ENCODE measurements at regions of chr1 and their contacts with region 1.

Region 1: DNA sequence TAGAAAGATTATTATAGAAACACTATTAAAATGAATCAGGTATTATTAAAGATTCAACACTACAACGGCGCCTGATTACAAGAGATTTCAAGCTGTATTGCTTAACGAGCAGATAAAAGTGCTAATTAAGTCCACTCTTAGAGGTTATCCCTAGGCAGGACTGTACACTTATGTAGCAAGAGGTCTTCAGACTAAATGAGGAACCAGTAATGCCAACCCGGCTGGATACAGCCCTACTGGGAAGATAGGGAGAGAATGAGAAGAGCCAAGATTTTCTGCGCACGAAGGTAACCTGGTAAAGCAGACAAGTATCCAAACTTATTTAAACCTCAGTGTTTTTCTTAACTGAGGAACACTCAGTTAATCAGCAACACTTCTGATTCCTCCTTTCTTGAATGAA is 115.7 kb upstream of the HIVEP3 start:
- DNase-seq: no peak
- ATAC-seq: no peak

Region 2: GRCh38 chr1:41268154-41268770 is 766.2 kb before region 1 on chr1:
- intact Hi-C with region 1: loop called (anchors 5 kb)
- DNase-seq: peak; percentile 84
- ATAC-seq: peak; percentile 93

Measured in sciatic nerve (tissue), 2 donors.